ENCODE measurements at regions of chr7 and their contacts with region 1.

Region 1: DNA sequence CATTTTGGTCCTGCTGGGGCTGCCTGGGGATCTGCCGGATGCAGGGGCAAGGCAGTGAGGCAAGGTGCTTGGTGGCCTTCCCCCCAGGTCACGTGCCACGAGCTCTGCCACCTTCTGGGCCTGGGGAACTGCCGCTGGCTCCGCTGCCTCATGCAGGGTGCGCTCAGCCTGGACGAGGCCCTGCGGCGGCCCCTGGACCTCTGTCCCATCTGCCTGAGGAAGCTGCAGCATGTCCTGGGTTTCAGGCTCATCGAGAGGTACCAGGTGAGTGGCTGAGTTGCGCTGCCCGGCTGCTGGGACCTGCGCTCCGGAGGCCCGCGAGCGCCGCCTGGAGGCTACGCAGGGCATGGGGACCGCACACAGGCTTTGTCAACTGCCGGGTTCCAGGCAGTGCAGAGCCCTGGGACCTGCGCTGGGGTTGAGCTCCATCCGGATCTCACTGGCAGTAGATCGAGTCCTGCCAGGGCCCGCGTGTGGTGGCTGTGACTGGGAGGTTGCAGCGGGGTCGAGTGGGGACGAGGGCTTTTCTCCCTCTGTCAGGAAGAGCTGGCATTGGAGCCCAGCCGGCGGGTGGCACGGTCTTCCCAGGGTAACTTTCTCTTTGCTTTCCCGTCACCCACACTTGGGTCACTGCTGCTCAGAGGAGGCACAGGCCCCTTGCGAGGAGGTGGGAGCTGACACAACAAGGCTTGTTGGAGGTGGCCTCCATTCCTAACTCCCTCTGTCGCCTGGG is 21.7 kb downstream of the AMZ1 start:
- DNase-seq: peak; percentile 60
- ATAC-seq: peak; percentile 89
- H3K4me3 ChIP-seq: peak overlapping the region in 2 of 3 experiments; percentile 17 to 60; a peak in 4 of 6 replicates
- H3K27ac ChIP-seq: no peak overlapping the region
- H3K4me1 ChIP-seq: peaks cover 28% of the 10 kb centered on the region
- H3K27me3 ChIP-seq: peaks cover 0 to 18% of the 10 kb centered on the region in 2 experiments; a peak in 3 of 5 replicates
- CTCF ChIP-seq: peak; percentile 99
- EP300 ChIP-seq: no peak
- POLR2A ChIP-seq: no peak
- RAD21 ChIP-seq: peak; percentile 95

Region 2: GRCh38 chr7:1725199-1725690 is 984.5 kb before region 1 on chr7:
- CTCF ChIA-PET with region 1: no interaction called
- POLR2A ChIA-PET with region 1: no interaction called
- in situ Hi-C with region 1: no loop called
- intact Hi-C with region 1: no loop called
- DNase-seq: no peak
- ATAC-seq: no peak
- H3K4me3 ChIP-seq: no peak overlapping the region
- H3K27ac ChIP-seq: no peak overlapping the region
- H3K4me1 ChIP-seq: peaks cover 23% of the 10 kb centered on the region
- H3K27me3 ChIP-seq: peaks cover 2 to 17% of the 10 kb centered on the region in 2 experiments; a peak in 3 of 5 replicates
- CTCF ChIP-seq: no peak
- EP300 ChIP-seq: no peak
- POLR2A ChIP-seq: no peak
- RAD21 ChIP-seq: no peak

Region 3: GRCh38 chr7:2670720-2671391 is 38.9 kb before region 1 on chr7:
- CTCF ChIA-PET with region 1: interaction called, 15 read pairs
- POLR2A ChIA-PET with region 1: no interaction called
- in situ Hi-C with region 1: loop called (anchors 5 kb)
- intact Hi-C with region 1: loop called (anchors 2 kb)
- DNase-seq: peak; percentile 54
- ATAC-seq: peak; percentile 84
- H3K4me3 ChIP-seq: no peak overlapping the region
- H3K27ac ChIP-seq: no peak overlapping the region
- H3K4me1 ChIP-seq: peaks cover 27% of the 10 kb centered on the region
- H3K27me3 ChIP-seq: peaks cover 3 to 26% of the 10 kb centered on the region in 2 experiments; a peak in 4 of 5 replicates
- CTCF ChIP-seq: peak; percentile 95
- EP300 ChIP-seq: no peak
- POLR2A ChIP-seq: no peak
- RAD21 ChIP-seq: peak; percentile 95

Measured in HepG2 (cell line).